GM23248 (cell line): ENCODE measurements at regions of chr3 and their contacts with region 1.

Region 1: GRCh38 chr3:151660885-151661284 is 72.8 kb upstream of the AADACL2 start:
- DNase-seq: peak; percentile 37
- H3K4me3 ChIP-seq: no peak overlapping the region
- H3K27ac ChIP-seq: no peak overlapping the region
- H3K4me1 ChIP-seq: no peaks in the 10 kb centered on the region
- H3K27me3 ChIP-seq: 0 out of 2 replicates have a peak, but pooled peaks cover 4% of the 10 kb centered on the region

Region 2: GRCh38 chr3:151290673-151291072 is 370.2 kb before region 1 on chr3:
- in situ Hi-C with region 1: loop called (anchors 10 kb)
- DNase-seq: peak; percentile 73
- H3K4me3 ChIP-seq: no peak overlapping the region
- H3K27ac ChIP-seq: no peak overlapping the region
- H3K4me1 ChIP-seq: no peaks in the 10 kb centered on the region
- H3K27me3 ChIP-seq: no peaks in the 10 kb centered on the region

Region 3: GRCh38 chr3:151468284-151468917 is 192.5 kb before region 1 on chr3:
- in situ Hi-C with region 1: loop called (anchors 25 kb)
- DNase-seq: peak; percentile 69
- H3K4me3 ChIP-seq: no peak overlapping the region
- H3K27ac ChIP-seq: no peak overlapping the region
- H3K4me1 ChIP-seq: no peaks in the 10 kb centered on the region
- H3K27me3 ChIP-seq: no peaks in the 10 kb centered on the region

Region 4: GRCh38 chr3:151890721-151891141 is 229.8 kb after region 1 on chr3:
- in situ Hi-C with region 1: no loop called
- DNase-seq: no peak
- H3K4me3 ChIP-seq: no peak overlapping the region
- H3K27ac ChIP-seq: no peak overlapping the region
- H3K4me1 ChIP-seq: peaks cover 1% of the 10 kb centered on the region; the same call in 1 of the 2 replicates
- H3K27me3 ChIP-seq: no peaks in the 10 kb centered on the region

Region 5: GRCh38 chr3:152193673-152194267 is 532.9 kb after region 1 on chr3:
- in situ Hi-C with region 1: no loop called
- DNase-seq: no peak
- H3K4me3 ChIP-seq: no peak overlapping the region
- H3K27ac ChIP-seq: no peak overlapping the region
- H3K4me1 ChIP-seq: peaks cover 15% of the 10 kb centered on the region
- H3K27me3 ChIP-seq: no peaks in the 10 kb centered on the region